ENCODE measurements at regions of chr6 and their contacts with region 1.

Region 1: DNA sequence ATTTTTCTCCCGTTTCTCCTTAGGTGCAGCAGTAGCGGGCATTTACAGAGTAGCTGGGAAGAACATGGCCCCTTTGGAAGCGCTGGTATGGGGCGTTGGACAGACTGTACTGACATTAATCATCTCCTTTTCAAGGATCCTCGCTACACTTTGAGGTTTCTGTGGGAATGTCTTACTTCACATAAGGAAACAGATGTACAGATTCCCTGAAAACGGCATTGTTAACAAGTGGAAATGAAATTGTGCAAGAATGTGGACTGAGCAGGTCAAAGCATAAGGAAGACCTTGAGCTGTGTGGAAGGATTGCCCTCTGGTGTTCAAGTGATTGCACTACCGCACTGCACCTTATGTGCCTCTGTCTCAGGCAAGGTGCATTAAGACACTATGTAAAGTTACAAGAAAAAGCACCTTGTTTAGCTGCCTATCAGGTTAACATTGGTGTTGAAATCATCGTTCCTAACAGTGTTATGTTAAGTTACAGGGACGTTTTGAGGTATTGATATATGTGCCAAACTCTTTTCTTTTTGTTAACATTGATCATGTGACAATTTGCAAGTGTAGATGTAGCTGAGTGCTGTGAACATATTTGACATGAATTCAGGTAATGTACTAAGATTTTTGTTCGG is 38.0 kb downstream of the TMEM170B start:
- DNase-seq: peak in 1 of 2 donors; percentile 56
- ATAC-seq: peak; percentile 85 to 98 (median 92)
- H3K4me3 ChIP-seq: peak overlapping the region in 1 of 10 donors; percentile 13
- H3K27ac ChIP-seq: peak overlapping the region in 1 of 10 donors; percentile 22
- H3K4me1 ChIP-seq: peaks cover 0 to 6% (median 0%) of the 10 kb centered on the region in 9 donors
- H3K27me3 ChIP-seq: no peaks in the 10 kb centered on the region
- CTCF ChIP-seq: peak; percentile 66 to 88 (median 81)

Region 2: GRCh38 chr6:11144393-11144851 is 431.1 kb before region 1 on chr6:
- intact Hi-C with region 1: loop called in 4 of 10 experiments (anchors 1 to 10 kb)
- DNase-seq: peak; percentile 75 to 82
- ATAC-seq: peak; percentile 91 to 95 (median 94)
- H3K4me3 ChIP-seq: no peak overlapping the region
- H3K27ac ChIP-seq: no peak overlapping the region
- H3K4me1 ChIP-seq: peaks cover 0 to 17% (median 0%) of the 10 kb centered on the region in 9 donors
- H3K27me3 ChIP-seq: no peaks in the 10 kb centered on the region
- CTCF ChIP-seq: peak; percentile 77 to 97 (median 92)

Measured in heart right ventricle (tissue), 16 donors.